CD14-positive monocyte (primary cell): ENCODE measurements at regions of chr21 and their contacts with region 1.

Region 1: DNA sequence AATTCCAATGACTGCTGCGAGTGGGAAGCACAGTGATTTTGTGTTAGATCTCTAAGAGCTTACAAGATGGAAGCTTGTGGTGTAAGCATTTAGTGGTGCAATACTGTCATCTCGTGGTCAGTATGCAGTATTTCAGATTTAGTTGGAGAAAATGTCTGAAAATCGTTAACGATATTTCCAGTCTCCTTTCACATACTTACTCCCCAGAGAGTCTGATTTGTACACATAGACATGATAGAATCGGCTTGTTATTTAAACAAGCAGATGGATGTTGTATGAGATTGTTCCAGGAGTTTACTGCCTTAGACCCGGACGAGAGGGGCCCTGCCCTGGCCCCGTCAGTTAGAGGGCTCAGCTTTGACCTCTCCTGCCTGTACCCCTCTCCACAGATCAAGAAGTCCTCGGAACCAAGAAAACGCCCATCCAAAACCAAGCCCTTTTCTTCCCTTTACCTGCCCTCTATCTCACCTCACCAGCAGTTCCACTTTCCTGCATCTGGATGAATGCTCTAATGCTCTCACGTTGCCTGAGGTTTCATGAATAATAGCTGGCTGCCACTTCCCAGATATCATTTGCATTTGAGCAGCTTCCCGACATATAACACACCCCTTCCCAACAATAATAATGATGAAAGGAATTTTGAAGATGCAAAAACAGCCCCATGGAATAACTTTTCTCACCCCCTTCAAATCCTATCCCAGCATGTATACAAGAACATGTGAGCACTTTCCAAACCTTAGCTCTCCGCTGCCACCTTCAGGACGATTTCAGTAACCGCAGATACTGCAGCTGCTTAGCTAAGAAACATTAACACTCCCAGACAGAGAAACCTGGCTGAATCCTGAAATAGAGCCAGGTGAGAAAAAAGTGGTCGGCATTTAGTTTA is 247.3 kb downstream of the LTN1 start:
- DNase-seq: peak; percentile 48 to 64 (median 62)
- H3K4me3 ChIP-seq: peak overlapping the region; percentile 38 to 74 (median 73)
- H3K4me3 Mint-ChIP-seq: no peak overlapping the region
- H3K27ac ChIP-seq: no peak overlapping the region
- H3K27ac Mint-ChIP-seq: no peak overlapping the region
- H3K4me1 ChIP-seq: peaks cover 6% of the 10 kb centered on the region in 2 donors
- H3K4me1 Mint-ChIP-seq: no peaks in the 10 kb centered on the region
- H3K27me3 ChIP-seq: no peaks in the 10 kb centered on the region
- H3K27me3 Mint-ChIP-seq: peaks cover 0 to 1% (median 0%) of the 10 kb centered on the region in 3 donors
- CTCF ChIP-seq: peak; percentile 74

Region 2: DNA sequence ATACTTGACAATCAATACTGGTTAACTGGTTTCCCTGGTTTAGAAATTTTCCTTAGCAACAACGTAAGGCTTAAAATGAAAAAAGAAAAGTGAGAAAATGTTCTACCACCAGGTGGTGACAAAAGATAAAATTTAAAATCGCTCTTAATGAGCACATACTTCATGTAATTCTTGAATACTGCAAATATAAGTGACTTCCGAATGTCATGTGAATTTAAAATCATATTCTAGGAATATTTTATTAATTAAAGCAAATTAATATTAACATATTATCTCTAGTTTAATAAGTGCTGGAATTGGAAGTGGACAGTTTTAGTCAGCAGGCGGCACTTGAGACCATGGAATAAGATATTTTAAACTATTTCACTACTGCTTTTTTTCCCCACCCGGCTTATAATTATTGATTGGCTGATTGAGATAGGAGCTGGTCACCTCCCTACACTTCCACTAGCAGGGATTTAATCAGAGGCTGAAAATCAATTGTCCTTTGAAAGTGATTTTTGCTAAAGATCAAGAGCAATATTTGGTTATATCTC is 1895.2 kb before region 1 on chr21:
- intact Hi-C with region 1: loop called (anchors 2 kb)
- DNase-seq: peak in 2 of 3 donors; percentile 12 to 40
- H3K4me3 ChIP-seq: no peak overlapping the region
- H3K4me3 Mint-ChIP-seq: no peak overlapping the region
- H3K27ac ChIP-seq: no peak overlapping the region
- H3K27ac Mint-ChIP-seq: no peak overlapping the region
- H3K4me1 ChIP-seq: peaks cover 15 to 17% of the 10 kb centered on the region in 2 donors
- H3K4me1 Mint-ChIP-seq: peaks cover 18% of the 10 kb centered on the region
- H3K27me3 ChIP-seq: peaks cover 39 to 40% of the 10 kb centered on the region in 2 donors
- H3K27me3 Mint-ChIP-seq: peaks cover 36 to 39% (median 36%) of the 10 kb centered on the region in 3 donors
- CTCF ChIP-seq: peak; percentile 80

Region 3: GRCh38 chr21:27693376-27693775 is 1052.0 kb before region 1 on chr21:
- intact Hi-C with region 1: loop called in 1 of 2 experiments (anchors 10 kb)
- DNase-seq: no peak
- H3K4me3 ChIP-seq: no peak overlapping the region
- H3K4me3 Mint-ChIP-seq: no peak overlapping the region
- H3K27ac ChIP-seq: no peak overlapping the region
- H3K27ac Mint-ChIP-seq: no peak overlapping the region
- H3K4me1 ChIP-seq: no peaks in the 10 kb centered on the region
- H3K4me1 Mint-ChIP-seq: no peaks in the 10 kb centered on the region
- H3K27me3 ChIP-seq: peaks cover 0 to 3% of the 10 kb centered on the region in 2 donors
- H3K27me3 Mint-ChIP-seq: peaks cover 2 to 5% (median 4%) of the 10 kb centered on the region in 3 donors
- CTCF ChIP-seq: no peak

Region 4: DNA sequence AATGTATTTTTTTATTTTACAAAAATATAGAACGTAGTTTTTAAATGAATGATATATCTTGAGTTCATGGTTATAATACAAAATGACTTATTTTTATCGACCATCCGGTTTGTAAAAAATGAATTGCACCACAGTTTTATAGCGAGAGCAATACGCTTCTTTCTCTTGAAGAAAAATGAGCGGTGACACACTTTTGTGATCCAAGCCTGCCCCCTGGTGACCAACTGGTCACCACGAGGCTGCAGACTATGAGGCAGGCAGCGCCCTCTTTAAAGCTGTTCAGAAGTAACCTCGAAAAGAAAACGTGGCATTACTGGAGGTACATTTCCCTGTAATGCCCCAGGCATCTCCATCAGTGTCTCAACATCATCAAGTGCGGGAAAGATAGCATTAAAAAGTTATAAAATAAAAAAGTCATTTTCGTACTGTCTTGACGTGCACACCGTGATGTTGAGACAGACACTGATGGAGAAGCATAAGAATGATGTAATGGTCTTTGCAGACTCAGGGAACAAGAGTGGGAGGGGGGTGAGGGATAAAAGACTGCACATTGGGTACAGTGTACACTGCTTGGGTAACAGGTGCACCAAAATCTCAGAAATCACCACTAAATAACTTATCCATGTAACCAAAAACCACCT is 1044.3 kb before region 1 on chr21:
- intact Hi-C with region 1: loop called (anchors 10 kb)
- DNase-seq: peak; percentile 31 to 47 (median 33)
- H3K4me3 ChIP-seq: no peak overlapping the region
- H3K4me3 Mint-ChIP-seq: no peak overlapping the region
- H3K27ac ChIP-seq: no peak overlapping the region
- H3K27ac Mint-ChIP-seq: no peak overlapping the region
- H3K4me1 ChIP-seq: no peaks in the 10 kb centered on the region
- H3K4me1 Mint-ChIP-seq: no peaks in the 10 kb centered on the region
- H3K27me3 ChIP-seq: peaks cover 0 to 3% of the 10 kb centered on the region in 2 donors
- H3K27me3 Mint-ChIP-seq: peaks cover 2 to 4% (median 3%) of the 10 kb centered on the region in 3 donors
- CTCF ChIP-seq: peak; percentile 71

Region 5: GRCh38 chr21:28516991-28517592 is 228.3 kb before region 1 on chr21:
- intact Hi-C with region 1: loop called in 1 of 2 experiments (anchors 10 kb)
- DNase-seq: peak; percentile 1 to 15 (median 3)
- H3K4me3 ChIP-seq: no peak overlapping the region
- H3K4me3 Mint-ChIP-seq: no peak overlapping the region
- H3K27ac ChIP-seq: no peak overlapping the region
- H3K27ac Mint-ChIP-seq: no peak overlapping the region
- H3K4me1 ChIP-seq: peaks cover 0 to 3% of the 10 kb centered on the region in 2 donors
- H3K4me1 Mint-ChIP-seq: peaks cover 2% of the 10 kb centered on the region
- H3K27me3 ChIP-seq: no peaks in the 10 kb centered on the region
- H3K27me3 Mint-ChIP-seq: no peaks in the 10 kb centered on the region
- CTCF ChIP-seq: peak; percentile 43